ENCODE measurements at regions of chr14 and their contacts with region 1.

Region 1: GRCh38 chr14:102516531-102517415 is 7.2 kb upstream of the ANKRD9 start:
- DNase-seq: peak; percentile 54
- H3K4me3 Mint-ChIP-seq: peak overlapping the region; percentile 80
- H3K27ac Mint-ChIP-seq: peak overlapping the region; percentile 43
- H3K4me1 Mint-ChIP-seq: peaks cover 3% of the 10 kb centered on the region
- H3K27me3 Mint-ChIP-seq: peaks cover 6% of the 10 kb centered on the region

Region 2: DNA sequence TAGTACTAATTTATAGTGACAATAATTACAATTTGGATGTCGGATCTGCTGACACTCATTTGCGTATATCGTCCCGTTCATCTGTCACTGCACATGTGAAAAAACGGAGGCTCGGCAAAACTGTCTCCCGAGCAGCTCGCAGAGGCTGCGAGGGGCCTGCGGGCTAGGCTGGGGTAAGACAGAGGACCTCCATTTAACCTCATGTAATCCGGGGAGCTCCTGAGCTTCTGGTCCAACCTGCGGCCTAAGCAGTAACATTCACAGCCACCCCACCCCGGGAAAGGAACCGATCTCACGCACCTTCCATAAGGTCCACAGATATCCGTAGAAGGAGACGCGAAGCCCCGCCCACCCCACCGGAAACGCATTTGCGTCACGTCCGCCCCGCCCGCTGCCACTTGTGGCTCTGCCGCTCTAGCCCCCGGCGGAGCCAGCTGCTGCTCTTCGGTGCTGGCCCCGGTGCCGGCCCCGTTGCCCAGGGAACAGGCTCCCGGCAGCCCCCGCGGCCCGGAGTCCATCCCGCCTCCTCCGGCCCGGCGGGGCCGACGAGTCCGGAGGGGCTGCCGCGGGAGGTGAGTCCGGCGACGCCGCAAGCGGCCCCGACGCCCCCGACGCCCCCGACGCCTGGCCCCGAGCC is 154.1 kb before region 1 on chr14 and contains the starts of genes CINP and TECPR2:
- intact Hi-C with region 1: loop called (anchors 2 kb)
- DNase-seq: peak; percentile 91
- H3K4me3 Mint-ChIP-seq: peak within 1 kb of the TSS; percentile 90
- H3K27ac Mint-ChIP-seq: peak within 1 kb of the TSS; percentile 93
- H3K4me1 Mint-ChIP-seq: peaks cover 22% of the 10 kb centered on the region
- H3K27me3 Mint-ChIP-seq: no peaks in the 10 kb centered on the region
- total RNA-seq, gene CINP: 39.6 and 42.9 TPM in 2 replicates
- total RNA-seq, gene TECPR2: 7.8 and 12.8 TPM in 2 replicates

Region 3: GRCh38 chr14:102437997-102438915 is 78.5 kb before region 1 on chr14:
- intact Hi-C with region 1: loop called (anchors 1 kb)
- DNase-seq: peak; percentile 63
- H3K4me3 Mint-ChIP-seq: no peak overlapping the region
- H3K27ac Mint-ChIP-seq: no peak overlapping the region
- H3K4me1 Mint-ChIP-seq: peaks cover 6% of the 10 kb centered on the region
- H3K27me3 Mint-ChIP-seq: no peaks in the 10 kb centered on the region